ENCODE measurements at regions of chr3 and their contacts with region 1.

Region 1: DNA sequence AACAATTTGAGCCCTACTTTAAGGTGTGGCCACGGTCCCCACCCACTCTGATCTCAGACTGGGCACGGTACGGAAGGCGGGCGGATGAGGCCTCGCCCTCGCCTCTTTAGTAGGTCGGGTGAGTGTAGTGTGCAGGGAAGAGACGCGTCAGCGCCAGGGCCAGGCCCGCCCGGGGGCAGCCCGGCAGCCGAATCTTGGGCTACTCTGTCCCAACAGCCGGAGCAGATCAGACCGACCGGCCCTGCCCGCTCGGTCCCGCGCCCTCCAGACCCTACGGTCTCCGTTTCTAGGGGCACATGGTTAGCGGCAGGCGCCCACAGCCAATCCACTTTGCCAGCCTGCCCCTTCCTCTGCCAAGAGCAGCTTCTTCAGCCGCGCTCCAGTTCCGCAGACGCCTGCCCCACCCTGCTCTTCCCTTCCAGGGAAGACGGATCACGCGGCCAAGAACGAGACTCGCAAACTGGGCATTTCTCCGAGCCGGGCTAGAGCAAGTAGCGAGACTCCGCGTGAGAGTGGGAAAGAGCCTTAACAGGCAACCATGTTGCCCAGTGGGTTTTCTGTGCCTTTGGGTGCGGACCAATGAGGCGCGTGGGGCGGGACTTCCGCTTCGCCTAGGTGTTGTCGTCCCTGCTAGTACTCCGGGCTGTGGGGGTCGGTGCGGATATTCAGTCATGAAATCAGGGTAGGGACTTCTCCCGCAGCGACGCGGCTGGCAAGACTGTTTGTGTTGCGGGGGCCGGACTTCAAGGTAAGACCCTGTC is at the start of gene RNF13:
- DNase-seq: peak; percentile 94
- H3K4me3 ChIP-seq: peak within 1 kb of the TSS; percentile 87
- H3K27ac ChIP-seq: peak within 1 kb of the TSS; percentile 77
- H3K4me1 ChIP-seq: peaks cover 43% of the 10 kb centered on the region
- CTCF ChIP-seq: no peak
- total RNA-seq, gene RNF13: 16.1 and 26.2 TPM in 2 replicates

Region 2: DNA sequence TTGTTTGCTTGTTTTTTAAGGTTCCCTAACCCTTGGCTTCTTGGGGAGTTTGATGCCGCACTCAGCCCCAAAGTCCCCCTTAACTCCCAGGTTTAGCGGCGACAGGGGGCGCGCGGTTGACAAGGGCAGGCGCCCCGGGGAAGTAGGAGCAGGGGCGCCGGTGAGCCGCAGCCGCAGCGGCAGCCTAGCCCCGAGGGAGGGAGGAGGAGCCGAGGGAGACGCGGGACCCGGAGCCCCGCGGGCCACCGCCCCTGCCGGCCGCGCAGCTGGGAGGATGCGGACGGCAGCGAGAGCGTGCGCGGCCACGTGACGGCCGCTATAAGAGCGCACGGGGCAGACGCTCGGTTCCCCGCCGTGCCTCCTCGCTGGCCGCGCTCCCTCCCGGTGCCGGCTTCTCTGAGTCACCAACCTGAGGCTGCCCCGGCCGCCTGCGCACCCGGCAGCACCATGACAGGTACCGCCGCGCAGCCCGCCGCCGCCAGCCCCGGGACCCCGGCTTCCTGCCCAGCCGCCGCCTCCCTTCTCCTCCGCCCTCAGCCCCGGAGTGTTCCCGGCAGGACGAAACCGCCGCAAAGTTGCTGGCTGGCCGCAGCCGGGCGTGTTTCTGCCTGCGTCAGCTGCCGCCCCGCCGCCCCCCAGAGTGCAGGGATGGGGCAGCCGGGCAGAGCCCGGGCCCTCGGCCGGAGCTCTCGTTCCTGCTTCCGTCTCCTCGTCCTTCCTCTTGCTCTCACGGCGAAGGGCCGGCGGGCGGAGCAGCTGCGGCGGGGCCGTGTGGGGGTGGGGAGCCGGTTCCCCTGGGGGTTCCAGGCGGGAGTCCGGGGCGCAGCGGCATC is 821.4 kb before region 1 on chr3 and contains the start of gene GYG1:
- CTCF ChIA-PET with region 1: no interaction called
- POLR2A ChIA-PET with region 1: no interaction called
- intact Hi-C with region 1: loop called (anchors 5 kb)
- DNase-seq: peak; percentile 88
- H3K4me3 ChIP-seq: peak within 1 kb of the TSS; percentile 81
- H3K27ac ChIP-seq: peak within 1 kb of the TSS; percentile 50
- H3K4me1 ChIP-seq: peaks cover 20% of the 10 kb centered on the region
- CTCF ChIP-seq: peak; percentile 80
- total RNA-seq, gene GYG1: 9.6 and 11.5 TPM in 2 replicates

Region 3: GRCh38 chr3:149091983-149092382 is 720.8 kb before region 1 on chr3:
- CTCF ChIA-PET with region 1: no interaction called
- POLR2A ChIA-PET with region 1: no interaction called
- intact Hi-C with region 1: loop called (anchors 2 kb)
- DNase-seq: no peak
- H3K4me3 ChIP-seq: no peak overlapping the region
- H3K27ac ChIP-seq: peak overlapping the region; percentile 90
- H3K4me1 ChIP-seq: peaks cover 73% of the 10 kb centered on the region
- CTCF ChIP-seq: no peak

Region 4: DNA sequence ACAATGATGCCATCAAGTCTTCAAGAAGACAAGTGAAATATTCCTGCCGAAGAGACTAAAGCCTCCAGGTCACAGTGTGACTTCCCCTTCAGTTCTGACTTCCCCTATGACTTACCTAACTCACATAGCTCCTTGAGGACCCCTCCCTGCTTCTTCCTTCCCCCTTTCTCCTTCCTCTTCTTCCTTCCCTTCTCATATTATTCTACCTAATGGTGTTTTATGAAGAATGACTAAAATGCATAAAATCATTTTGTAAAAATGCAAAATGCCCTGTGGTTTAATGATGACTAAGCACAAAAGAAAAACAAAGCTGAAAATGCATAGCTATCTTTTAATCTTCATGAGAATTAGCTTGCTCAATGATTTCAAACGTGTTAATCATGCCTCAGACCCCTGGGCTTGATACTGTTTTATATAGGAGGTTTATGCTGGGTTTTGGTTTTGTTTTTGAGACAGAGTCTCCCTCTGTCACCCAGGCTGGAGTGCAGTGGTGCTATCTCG is 364.4 kb before region 1 on chr3:
- CTCF ChIA-PET with region 1: no interaction called
- POLR2A ChIA-PET with region 1: no interaction called
- intact Hi-C with region 1: no loop called
- DNase-seq: no peak
- H3K4me3 ChIP-seq: no peak overlapping the region
- H3K27ac ChIP-seq: no peak overlapping the region
- H3K4me1 ChIP-seq: no peaks in the 10 kb centered on the region
- CTCF ChIP-seq: no peak

Region 5: GRCh38 chr3:149752051-149752787 is 60.6 kb before region 1 on chr3 and contains the start of gene COMMD2:
- CTCF ChIA-PET with region 1: no interaction called
- POLR2A ChIA-PET with region 1: interaction called, 4 read pairs
- intact Hi-C with region 1: loop called (anchors 1 kb)
- DNase-seq: peak; percentile 94
- H3K4me3 ChIP-seq: peak within 1 kb of the TSS; percentile 77
- H3K27ac ChIP-seq: peak within 1 kb of the TSS; percentile 36
- H3K4me1 ChIP-seq: peaks cover 22% of the 10 kb centered on the region
- CTCF ChIP-seq: peak; percentile 75
- total RNA-seq, gene COMMD2: 24.9 and 27.2 TPM in 2 replicates

Region 6: DNA sequence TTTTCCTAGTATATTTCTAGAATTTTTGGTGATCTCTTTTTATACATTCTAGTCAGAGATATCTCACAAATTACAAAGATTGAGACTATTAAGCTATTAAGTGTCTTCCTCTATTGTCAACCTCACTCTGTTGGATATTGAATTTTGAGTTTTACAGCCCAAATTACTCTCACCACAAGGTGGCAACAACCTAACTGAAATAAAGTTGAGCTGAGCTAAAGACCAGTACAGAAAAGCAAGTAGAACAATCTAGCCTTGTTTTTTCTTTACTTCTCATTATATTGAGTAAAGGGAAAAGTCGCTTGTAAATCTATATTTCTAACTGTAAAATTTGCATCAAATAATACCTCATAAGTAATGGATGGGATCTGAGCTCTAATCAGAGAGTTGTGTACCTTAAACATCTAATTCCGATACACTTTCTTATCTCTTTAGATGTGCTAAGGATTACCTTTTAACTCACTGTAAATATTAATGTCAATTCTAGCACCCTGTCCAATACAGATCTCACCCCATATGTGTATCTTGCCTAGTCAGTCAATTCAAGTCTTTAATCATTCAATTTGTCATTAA is 46.9 kb before region 1 on chr3:
- CTCF ChIA-PET with region 1: interaction called, 10 read pairs
- POLR2A ChIA-PET with region 1: interaction called, 13 read pairs
- intact Hi-C with region 1: loop called (anchors 2 kb)
- DNase-seq: peak; percentile 37
- H3K4me3 ChIP-seq: no peak overlapping the region
- H3K27ac ChIP-seq: no peak overlapping the region
- H3K4me1 ChIP-seq: no peaks in the 10 kb centered on the region
- CTCF ChIP-seq: peak; percentile 84

Region 7: DNA sequence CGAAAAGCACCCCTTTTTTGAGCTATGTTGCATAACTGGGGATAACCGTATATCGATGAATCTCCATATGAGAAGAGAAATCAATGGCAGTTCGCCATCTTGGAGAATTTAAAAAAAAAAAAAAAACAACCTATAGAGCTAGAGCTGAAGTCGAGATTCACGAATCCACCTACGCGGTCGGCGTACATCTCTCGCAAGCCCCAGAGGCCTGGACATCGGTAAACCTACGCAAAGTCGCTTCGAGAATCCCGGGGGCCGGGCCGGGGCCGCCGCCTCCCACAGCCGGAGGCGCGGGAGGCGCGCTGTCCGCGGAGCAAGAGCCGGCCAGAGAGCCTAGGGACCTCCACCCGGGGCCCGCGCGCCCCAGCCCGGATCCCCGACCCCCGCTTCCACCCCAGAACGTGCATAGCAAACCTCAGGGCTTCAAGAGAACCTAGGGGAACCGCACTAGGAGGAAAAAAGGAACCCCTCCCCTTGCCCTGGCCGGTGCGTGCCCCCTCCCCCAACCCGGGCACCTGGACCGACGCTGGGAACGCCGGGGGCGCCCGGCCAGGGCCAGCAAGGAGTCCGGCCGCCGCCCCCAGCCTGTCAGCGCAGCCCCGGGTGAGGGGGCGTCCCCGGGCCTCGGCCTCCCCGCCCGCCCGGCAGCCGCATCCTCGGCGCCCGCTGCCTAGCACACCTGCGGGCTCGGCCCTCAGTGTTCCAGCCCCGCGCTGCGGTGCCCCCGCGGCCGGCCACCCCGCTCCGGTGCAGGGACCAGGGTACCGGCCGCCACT is 157.3 kb after region 1 on chr3:
- CTCF ChIA-PET with region 1: no interaction called
- POLR2A ChIA-PET with region 1: no interaction called
- intact Hi-C with region 1: loop called (anchors 5 kb)
- DNase-seq: peak; percentile 55
- H3K4me3 ChIP-seq: peak overlapping the region; percentile 71
- H3K27ac ChIP-seq: no peak overlapping the region
- H3K4me1 ChIP-seq: peaks cover 8% of the 10 kb centered on the region
- CTCF ChIP-seq: no peak

Measured in OCI-LY7 (cell line).